ENCODE measurements at regions of chr19 and their contacts with region 1.

Region 1: DNA sequence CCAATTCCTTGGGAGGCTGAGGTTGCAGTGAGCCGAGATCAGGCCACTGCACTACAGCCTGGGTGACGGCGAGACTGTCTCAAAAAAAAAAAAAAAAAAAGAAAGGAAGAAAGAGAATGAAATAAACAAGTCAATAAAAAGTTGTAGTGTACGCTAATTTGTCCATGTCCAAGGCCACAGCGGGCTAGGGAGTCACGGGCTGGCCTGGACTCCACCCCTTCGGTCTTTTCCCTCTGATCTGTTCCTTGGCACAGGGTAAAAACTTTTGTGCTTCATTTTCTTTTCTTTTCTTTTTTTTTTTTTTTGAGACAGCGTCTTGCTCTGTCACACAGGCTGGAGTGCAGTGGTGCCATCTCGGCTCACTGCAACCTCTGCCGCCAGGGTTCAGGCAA is 19.4 kb upstream of the MKNK2 start:
- DNase-seq: no peak
- ATAC-seq: no peak

Region 2: DNA sequence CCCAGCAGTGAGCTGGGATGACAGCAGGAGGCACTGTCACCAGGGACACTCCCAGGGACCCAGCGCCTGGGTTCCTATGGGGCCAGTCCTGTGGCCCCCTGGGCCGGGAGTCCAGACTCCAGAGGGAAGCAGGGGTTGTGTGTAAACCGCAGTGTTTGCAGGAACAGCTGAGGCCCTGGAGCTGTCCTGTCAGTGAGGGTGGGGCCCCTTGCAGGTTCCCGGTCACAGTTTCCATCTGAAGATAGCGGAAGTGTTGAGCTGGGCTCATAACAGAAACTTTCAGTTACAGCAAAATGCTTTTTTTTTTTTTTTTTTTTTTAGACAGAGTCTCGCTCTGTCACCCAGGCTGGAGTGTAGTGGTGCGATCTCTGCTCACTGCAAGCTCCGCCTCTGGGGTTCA is 147.1 kb before region 1 on chr19:
- intact Hi-C with region 1: loop called (anchors 5 kb)
- DNase-seq: no peak
- ATAC-seq: peak; percentile 45

Region 3: GRCh38 chr19:1975162-1975480 is 95.3 kb before region 1 on chr19:
- intact Hi-C with region 1: no loop called
- DNase-seq: no peak
- ATAC-seq: no peak

Region 4: GRCh38 chr19:2018752-2019151 is 51.7 kb before region 1 on chr19:
- intact Hi-C with region 1: loop called (anchors 2 kb)
- DNase-seq: no peak
- ATAC-seq: no peak

Measured in Right ventricle myocardium superior (tissue), 1 donor.